ENCODE measurements at regions of chr12 and their contacts with region 1.

Region 1: GRCh38 chr12:108803428-108804105 is 53.8 kb downstream of the SSH1 start:
- DNase-seq: peak; percentile 94
- H3K4me3 ChIP-seq: peak overlapping the region in 1 of 4 donors; percentile 5
- H3K27ac ChIP-seq: peak overlapping the region; percentile 91 to 97 (median 92)
- H3K4me1 ChIP-seq: peaks cover 0 to 86% (median 81%) of the 10 kb centered on the region in 4 donors
- H3K27me3 ChIP-seq: no peaks in the 10 kb centered on the region
- CTCF ChIP-seq: peak; percentile 94 to 98 (median 96)
- EP300 ChIP-seq: peak in 1 of 4 donors; percentile 10
- POLR2A ChIP-seq: no peak

Region 2: GRCh38 chr12:108562348-108563135 is 241.0 kb before region 1 on chr12 and contains the start of gene ISCU:
- intact Hi-C with region 1: loop called (anchors 1 kb)
- DNase-seq: peak; percentile 98
- H3K4me3 ChIP-seq: peak within 1 kb of the TSS; percentile 81 to 97 (median 86)
- H3K27ac ChIP-seq: peak within 1 kb of the TSS; percentile 93 to 98 (median 96)
- H3K4me1 ChIP-seq: peaks cover 0 to 73% (median 65%) of the 10 kb centered on the region in 4 donors
- H3K27me3 ChIP-seq: no peaks in the 10 kb centered on the region
- CTCF ChIP-seq: no peak
- EP300 ChIP-seq: no peak
- POLR2A ChIP-seq: peak; percentile 82 to 91
- total RNA-seq, gene ISCU: 197 to 294 (median 260) TPM

Region 3: GRCh38 chr12:108731105-108731865 is 72.3 kb before region 1 on chr12 and contains the start of gene CORO1C:
- intact Hi-C with region 1: loop called (anchors 1 kb)
- DNase-seq: peak; percentile 98
- H3K4me3 ChIP-seq: peak within 1 kb of the TSS; percentile 98 to 100 (median 99)
- H3K27ac ChIP-seq: peak within 1 kb of the TSS; percentile 99 to 100 (median 100)
- H3K4me1 ChIP-seq: peaks cover 0 to 47% (median 30%) of the 10 kb centered on the region in 4 donors
- H3K27me3 ChIP-seq: no peaks in the 10 kb centered on the region
- CTCF ChIP-seq: peak in 3 of 4 experiments; percentile 75 to 90 (median 78)
- EP300 ChIP-seq: no peak
- POLR2A ChIP-seq: peak in 1 of 2 donors; percentile 82
- total RNA-seq, gene CORO1C: 247 to 569 (median 360) TPM

Region 4: GRCh38 chr12:108856428-108857157 is 53.0 kb after region 1 on chr12:
- intact Hi-C with region 1: loop called (anchors 1 kb)
- DNase-seq: peak; percentile 87
- H3K4me3 ChIP-seq: peak overlapping the region; percentile 63 to 84 (median 78)
- H3K27ac ChIP-seq: peak overlapping the region; percentile 91 to 99 (median 96)
- H3K4me1 ChIP-seq: peaks cover 0 to 63% (median 55%) of the 10 kb centered on the region in 4 donors
- H3K27me3 ChIP-seq: no peaks in the 10 kb centered on the region
- CTCF ChIP-seq: no peak
- EP300 ChIP-seq: no peak
- POLR2A ChIP-seq: peak in 1 of 2 donors; percentile 22

Region 5: DNA sequence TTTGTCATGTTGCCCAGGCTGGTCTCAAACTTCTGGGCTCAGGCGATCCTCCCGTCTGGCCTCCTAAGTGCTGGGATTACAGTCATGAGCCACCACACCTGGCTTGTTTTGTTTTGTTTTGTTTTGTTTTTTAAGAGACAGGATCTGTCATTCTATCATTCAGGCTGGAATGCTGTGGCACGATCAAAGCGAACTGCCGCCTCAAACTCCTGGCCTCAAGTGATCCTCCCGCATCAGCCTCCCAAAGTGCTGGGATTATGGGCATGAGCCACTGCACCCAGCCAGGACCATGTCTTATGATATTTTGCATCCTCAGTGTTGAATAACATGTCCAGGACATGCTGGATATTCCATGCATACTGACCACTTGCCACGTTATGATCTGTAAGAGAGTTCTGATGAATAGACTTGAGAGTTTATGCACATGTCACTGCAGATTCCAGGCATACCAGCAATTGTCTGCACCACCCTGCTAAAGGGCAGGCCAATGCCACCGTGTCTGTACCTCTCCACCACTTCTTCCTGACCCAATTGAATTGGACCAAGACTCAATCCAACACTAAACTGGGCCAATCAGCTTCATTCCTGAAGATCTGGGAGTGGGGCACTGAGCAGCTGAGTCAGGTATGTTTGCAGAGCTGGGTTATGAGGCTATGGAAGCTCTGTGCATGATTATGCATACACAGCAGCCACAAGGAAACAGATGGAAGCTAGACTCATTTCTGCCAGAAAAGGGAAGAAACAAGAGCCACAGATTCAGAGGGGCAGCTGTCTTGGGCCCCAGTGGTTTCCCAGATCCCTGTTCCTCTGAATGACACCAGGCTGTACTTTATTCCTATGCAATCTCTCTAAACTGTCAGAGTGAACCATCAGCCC is 104.1 kb after region 1 on chr12:
- intact Hi-C with region 1: no loop called
- DNase-seq: no peak
- H3K4me3 ChIP-seq: no peak overlapping the region
- H3K27ac ChIP-seq: peak overlapping the region in 1 of 4 donors; percentile 11
- H3K4me1 ChIP-seq: no peaks in the 10 kb centered on the region
- H3K27me3 ChIP-seq: no peaks in the 10 kb centered on the region
- CTCF ChIP-seq: no peak
- EP300 ChIP-seq: no peak
- POLR2A ChIP-seq: no peak

Region 6: GRCh38 chr12:109093022-109093918 is 289.7 kb after region 1 on chr12 and contains the start of gene ALKBH2:
- intact Hi-C with region 1: loop called (anchors 10 kb)
- DNase-seq: peak; percentile 96
- H3K4me3 ChIP-seq: peak within 1 kb of the TSS; percentile 41 to 60 (median 52)
- H3K27ac ChIP-seq: peak within 1 kb of the TSS; percentile 70 to 81 (median 76)
- H3K4me1 ChIP-seq: peaks cover 0 to 32% (median 27%) of the 10 kb centered on the region in 4 donors
- H3K27me3 ChIP-seq: no peaks in the 10 kb centered on the region
- CTCF ChIP-seq: peak; percentile 93 to 98 (median 95)
- EP300 ChIP-seq: peak in 2 of 4 donors; percentile 5 to 82
- POLR2A ChIP-seq: peak in 1 of 2 donors; percentile 17
- total RNA-seq, gene ALKBH2: 11.6 to 29.3 (median 16.5) TPM